ENCODE measurements at regions of chr4 and their contacts with region 1.

Region 1: GRCh38 chr4:183053681-183054080 is 45.4 kb upstream of the WWC2 start:
- DNase-seq: no peak
- H3K4me3 ChIP-seq: no peak overlapping the region
- H3K27ac ChIP-seq: no peak overlapping the region
- H3K4me1 ChIP-seq: no peaks in the 10 kb centered on the region
- H3K27me3 ChIP-seq: no peaks in the 10 kb centered on the region
- CTCF ChIP-seq: no peak
- POLR2A ChIP-seq: no peak

Region 2: GRCh38 chr4:182955411-182955810 is 98.3 kb before region 1 on chr4:
- intact Hi-C with region 1: loop called (anchors 2 kb)
- DNase-seq: no peak
- H3K4me3 ChIP-seq: no peak overlapping the region
- H3K27ac ChIP-seq: no peak overlapping the region
- H3K4me1 ChIP-seq: no peaks in the 10 kb centered on the region
- H3K27me3 ChIP-seq: no peaks in the 10 kb centered on the region
- CTCF ChIP-seq: no peak
- POLR2A ChIP-seq: no peak

Measured in breast epithelium (tissue), 4 donors.